Heart right ventricle (tissue), 16 donors: ENCODE measurements at regions of chr2 and their contacts with region 1.

Region 1: DNA sequence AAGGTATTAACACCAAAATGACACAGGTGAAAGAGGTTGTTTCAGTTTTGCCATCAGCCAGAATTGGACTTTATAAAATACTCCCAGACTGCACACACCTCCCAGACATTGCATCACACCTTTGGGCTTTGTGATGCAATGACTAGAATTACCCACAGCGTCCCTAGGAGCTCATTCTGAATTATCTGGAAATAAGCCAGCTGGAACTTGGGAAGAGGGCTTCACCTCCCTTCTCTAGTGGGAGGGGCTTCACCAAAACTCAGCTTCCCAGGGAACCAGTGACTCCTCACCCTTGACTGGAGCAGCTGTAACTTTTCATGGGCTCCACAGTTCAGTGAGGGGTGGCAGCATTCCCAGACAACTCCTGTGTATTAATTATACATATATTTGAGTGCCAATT is 83.1 kb upstream of the BZW1 start:
- DNase-seq: no peak
- ATAC-seq: peak in 4 of 8 donors; percentile 29 to 94 (median 59)
- H3K4me3 ChIP-seq: no peak overlapping the region
- H3K27ac ChIP-seq: no peak overlapping the region
- H3K4me1 ChIP-seq: no peaks in the 10 kb centered on the region
- H3K27me3 ChIP-seq: peaks cover 0 to 35% (median 11%) of the 10 kb centered on the region in 7 donors
- CTCF ChIP-seq: no peak

Region 2: GRCh38 chr2:199985625-199986207 is 742.9 kb before region 1 on chr2:
- intact Hi-C with region 1: loop called in 1 of 10 experiments (anchors 5 kb)
- DNase-seq: peak; percentile 17 to 59
- ATAC-seq: peak in 6 of 8 donors; percentile 32 to 87 (median 45)
- H3K4me3 ChIP-seq: no peak overlapping the region
- H3K27ac ChIP-seq: no peak overlapping the region
- H3K4me1 ChIP-seq: peaks cover 0 to 23% (median 14%) of the 10 kb centered on the region in 9 donors
- H3K27me3 ChIP-seq: no peaks in the 10 kb centered on the region
- CTCF ChIP-seq: peak; percentile 24 to 71 (median 59)

Region 3: DNA sequence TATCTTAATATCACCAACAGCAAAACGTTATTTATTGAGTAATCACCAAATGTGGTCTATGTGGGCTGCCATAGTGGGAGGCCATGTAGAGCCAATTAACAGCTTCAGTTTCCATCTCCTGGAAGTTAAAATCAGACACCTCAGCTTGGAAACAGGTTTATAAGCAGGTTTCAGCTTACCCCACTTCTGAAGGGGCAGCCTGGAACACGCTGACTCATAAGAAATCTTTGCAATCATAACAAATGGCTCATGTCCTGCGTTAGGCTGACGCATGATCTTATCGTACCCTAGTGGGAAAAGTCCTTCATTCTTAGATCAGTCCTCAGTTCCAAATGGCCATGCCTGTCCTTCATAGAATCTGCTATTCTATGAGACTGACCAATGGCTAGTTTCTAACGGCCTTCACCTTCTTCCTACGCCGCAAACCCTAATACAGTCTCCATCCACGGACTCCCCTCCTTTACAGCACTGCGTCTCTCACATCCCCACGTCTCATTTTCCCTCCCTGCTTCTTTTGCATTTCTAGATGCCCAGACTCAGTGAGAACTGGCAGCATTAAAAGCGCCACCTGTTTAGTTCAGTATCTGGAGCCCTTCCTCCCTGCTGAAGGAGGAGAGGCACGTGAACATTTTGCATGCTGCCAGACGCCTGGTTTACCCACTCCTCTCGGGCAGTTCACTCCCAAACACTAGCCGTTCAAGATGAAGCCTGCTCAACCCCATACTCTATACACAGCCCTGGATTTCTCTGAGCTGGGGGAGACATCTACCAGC is 58.9 kb after region 1 on chr2:
- intact Hi-C with region 1: loop called in 1 of 10 experiments (anchors 10 kb)
- DNase-seq: no peak
- ATAC-seq: peak in 7 of 8 donors; percentile 17 to 82 (median 45)
- H3K4me3 ChIP-seq: no peak overlapping the region
- H3K27ac ChIP-seq: peak overlapping the region in 5 of 10 donors; percentile 3 to 83 (median 19)
- H3K4me1 ChIP-seq: peaks cover 0 to 28% (median 13%) of the 10 kb centered on the region in 9 donors
- H3K27me3 ChIP-seq: no peaks in the 10 kb centered on the region
- CTCF ChIP-seq: no peak

Region 4: GRCh38 chr2:200888704-200889625 is 160.3 kb after region 1 on chr2 and contains the starts of genes NIF3L1 and PPIL3:
- intact Hi-C with region 1: no loop called
- DNase-seq: peak; percentile 94 to 96
- ATAC-seq: peak; percentile 96 to 98 (median 97)
- H3K4me3 ChIP-seq: peak within 1 kb of the TSS; percentile 61 to 93 (median 78)
- H3K27ac ChIP-seq: peak within 1 kb of the TSS; percentile 72 to 97 (median 92)
- H3K4me1 ChIP-seq: peaks cover 0 to 28% (median 22%) of the 10 kb centered on the region in 9 donors
- H3K27me3 ChIP-seq: no peaks in the 10 kb centered on the region
- CTCF ChIP-seq: peak in 1 of 9 donors; percentile 1
- total RNA-seq, gene NIF3L1: 14.2 to 24.5 (median 20.7) TPM
- total RNA-seq, gene PPIL3: 14.2 to 33.1 (median 24.1) TPM